Mammary epithelial cell (primary cell): ENCODE measurements at regions of chr10 and their contacts with region 1.

Region 1: GRCh38 chr10:50542871-50543270 is 80.9 kb downstream of the SGMS1 start:
- DNase-seq: no peak
- H3K4me3 ChIP-seq: no peak overlapping the region
- H3K27ac ChIP-seq: no peak overlapping the region
- H3K4me1 ChIP-seq: peaks cover 3% of the 10 kb centered on the region
- H3K27me3 ChIP-seq: no peaks in the 10 kb centered on the region
- CTCF ChIP-seq: no peak

Region 2: GRCh38 chr10:52368741-52369140 is 1825.9 kb after region 1 on chr10:
- CTCF ChIA-PET with region 1: interaction called, 20 read pairs
- dilution Hi-C with region 1: no loop called
- in situ Hi-C with region 1: no loop called
- intact Hi-C with region 1: no loop called
- DNase-seq: no peak
- H3K4me3 ChIP-seq: no peak overlapping the region
- H3K27ac ChIP-seq: no peak overlapping the region
- H3K4me1 ChIP-seq: no peaks in the 10 kb centered on the region
- H3K27me3 ChIP-seq: no peaks in the 10 kb centered on the region
- CTCF ChIP-seq: peak in 1 of 2 donors; percentile 20